ENCODE measurements at regions of chr18 and their contacts with region 1.

Region 1: GRCh38 chr18:23213200-23213599 is 77.9 kb downstream of the CABLES1 start:
- DNase-seq: no peak
- H3K4me3 ChIP-seq: no peak overlapping the region
- H3K27ac ChIP-seq: peak overlapping the region in 55 of 59 donors; percentile 30 to 91 (median 77)
- H3K27me3 ChIP-seq: no peaks in the 10 kb centered on the region
- CTCF ChIP-seq: no peak

Region 2: DNA sequence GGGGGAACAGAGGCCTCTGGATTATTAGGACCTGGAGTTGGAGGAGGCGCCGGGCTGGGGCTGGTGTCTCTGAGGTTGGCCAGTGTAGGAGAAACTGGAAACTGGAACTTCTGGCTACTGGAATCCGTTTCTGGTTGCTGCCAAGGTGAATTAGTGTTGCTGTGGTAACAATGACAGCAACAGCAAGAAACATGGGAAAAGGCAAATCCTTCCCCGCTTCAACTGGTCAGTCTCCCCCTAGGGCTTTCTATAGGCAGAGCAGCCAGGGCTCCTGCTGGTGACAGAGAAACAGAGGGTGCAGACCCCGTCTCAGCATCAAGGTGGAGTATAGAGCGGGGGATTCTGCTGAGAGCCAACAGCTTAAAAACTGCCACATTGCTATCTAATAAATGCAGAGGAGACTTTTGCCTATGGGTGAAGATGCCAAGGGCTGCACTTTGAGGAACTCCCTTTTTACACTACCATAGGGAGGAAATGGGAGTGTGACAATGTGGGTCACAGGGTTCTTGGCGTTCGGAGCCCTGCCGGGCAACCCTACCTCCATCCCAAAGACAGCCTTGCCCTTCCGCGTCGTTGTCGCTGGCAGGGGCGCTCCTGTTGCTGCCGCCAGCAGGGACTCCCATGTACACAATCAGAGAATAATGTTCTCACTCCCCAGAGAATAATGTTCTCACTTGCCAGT is 159.3 kb before region 1 on chr18:
- intact Hi-C with region 1: loop called in 1 of 2 experiments (anchors 10 kb)
- DNase-seq: no peak
- H3K4me3 ChIP-seq: peak overlapping the region in 3 of 59 donors; percentile 21 to 27 (median 22)
- H3K27ac ChIP-seq: no peak overlapping the region
- H3K27me3 ChIP-seq: peaks cover 0 to 4% (median 0%) of the 10 kb centered on the region in 45 donors
- CTCF ChIP-seq: no peak

Region 3: DNA sequence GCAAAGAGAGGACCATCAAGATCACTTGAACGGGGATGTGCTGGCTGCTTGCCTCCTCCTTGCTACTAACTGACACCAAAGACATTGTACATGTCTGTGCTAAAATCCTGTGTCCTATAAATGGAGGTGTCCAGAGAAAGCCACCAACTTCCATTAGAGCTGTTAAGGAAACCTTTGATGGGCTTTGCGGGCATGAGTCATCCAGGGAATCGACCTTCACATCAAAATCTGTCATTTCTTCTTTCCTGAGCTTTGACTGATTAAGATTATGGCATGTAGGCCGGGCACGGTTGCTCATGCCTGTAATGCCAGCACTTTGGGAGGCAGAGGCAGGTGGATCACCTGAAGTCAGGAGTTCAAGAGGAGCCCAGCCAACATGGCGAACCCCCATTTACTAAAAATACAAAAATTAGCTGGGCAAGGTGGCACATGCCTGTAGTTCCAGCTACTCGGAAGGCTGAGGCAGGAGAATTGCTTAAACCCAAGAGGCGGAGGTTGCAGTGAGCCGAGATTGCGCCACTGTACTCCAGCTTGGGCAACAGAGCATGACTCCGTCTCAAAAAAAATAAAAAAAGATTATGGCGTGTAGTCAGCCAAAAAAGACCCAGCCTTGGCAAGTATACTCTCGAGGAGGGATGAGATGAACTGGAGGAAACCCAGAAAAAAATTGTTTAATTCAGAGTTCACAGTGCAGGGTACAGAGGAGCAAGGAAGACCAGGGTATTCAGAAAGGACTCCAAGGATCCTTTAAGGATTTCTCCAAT is 37.9 kb after region 1 on chr18:
- intact Hi-C with region 1: no loop called
- DNase-seq: no peak
- H3K4me3 ChIP-seq: no peak overlapping the region
- H3K27ac ChIP-seq: peak overlapping the region in 1 of 59 donors; percentile 37
- H3K27me3 ChIP-seq: no peaks in the 10 kb centered on the region
- CTCF ChIP-seq: no peak

Region 4: DNA sequence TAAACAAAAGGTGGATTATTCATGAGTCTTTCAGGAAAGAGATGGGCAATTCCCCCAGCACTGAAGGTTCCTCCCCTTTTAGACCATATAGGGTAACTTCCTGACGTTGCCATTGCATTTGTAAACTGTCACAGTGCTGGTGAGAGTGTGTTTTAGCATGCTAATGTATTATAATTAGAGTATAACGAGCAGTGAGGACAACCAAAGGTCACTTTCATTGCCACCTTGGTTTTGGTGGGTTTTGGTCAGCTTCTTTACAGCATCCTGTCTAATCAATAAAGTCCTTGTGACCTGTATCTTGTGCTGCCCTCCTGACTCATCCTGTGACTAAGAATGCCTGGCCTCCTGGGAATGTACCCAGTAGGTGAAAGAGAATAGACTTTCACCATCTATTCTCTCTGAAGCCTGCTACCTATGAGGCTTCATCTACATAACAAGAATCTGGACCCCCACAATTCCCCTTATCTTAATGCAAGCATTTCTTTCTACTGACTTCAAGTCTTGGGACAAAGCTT is 70.8 kb after region 1 on chr18:
- intact Hi-C with region 1: no loop called
- DNase-seq: no peak
- H3K4me3 ChIP-seq: no peak overlapping the region
- H3K27ac ChIP-seq: no peak overlapping the region
- H3K27me3 ChIP-seq: no peaks in the 10 kb centered on the region
- CTCF ChIP-seq: no peak

Measured in dorsolateral prefrontal cortex (tissue), 120 donors.